Activated CD4-positive, alpha-beta memory T cell treated with anti-CD3 and anti-CD28 coated beads for 36 hours (primary cell): ENCODE measurements at regions of chr17 and their contacts with region 1.

Region 1: GRCh38 chr17:78250891-78251794 is 19.7 kb downstream of the TMEM235 start:
- DNase-seq: peak; percentile 92
- H3K4me3 Mint-ChIP-seq: peak overlapping the region; percentile 44
- H3K27ac Mint-ChIP-seq: peak overlapping the region; percentile 9
- H3K4me1 Mint-ChIP-seq: peaks cover 31% of the 10 kb centered on the region
- H3K27me3 Mint-ChIP-seq: no peaks in the 10 kb centered on the region

Region 2: DNA sequence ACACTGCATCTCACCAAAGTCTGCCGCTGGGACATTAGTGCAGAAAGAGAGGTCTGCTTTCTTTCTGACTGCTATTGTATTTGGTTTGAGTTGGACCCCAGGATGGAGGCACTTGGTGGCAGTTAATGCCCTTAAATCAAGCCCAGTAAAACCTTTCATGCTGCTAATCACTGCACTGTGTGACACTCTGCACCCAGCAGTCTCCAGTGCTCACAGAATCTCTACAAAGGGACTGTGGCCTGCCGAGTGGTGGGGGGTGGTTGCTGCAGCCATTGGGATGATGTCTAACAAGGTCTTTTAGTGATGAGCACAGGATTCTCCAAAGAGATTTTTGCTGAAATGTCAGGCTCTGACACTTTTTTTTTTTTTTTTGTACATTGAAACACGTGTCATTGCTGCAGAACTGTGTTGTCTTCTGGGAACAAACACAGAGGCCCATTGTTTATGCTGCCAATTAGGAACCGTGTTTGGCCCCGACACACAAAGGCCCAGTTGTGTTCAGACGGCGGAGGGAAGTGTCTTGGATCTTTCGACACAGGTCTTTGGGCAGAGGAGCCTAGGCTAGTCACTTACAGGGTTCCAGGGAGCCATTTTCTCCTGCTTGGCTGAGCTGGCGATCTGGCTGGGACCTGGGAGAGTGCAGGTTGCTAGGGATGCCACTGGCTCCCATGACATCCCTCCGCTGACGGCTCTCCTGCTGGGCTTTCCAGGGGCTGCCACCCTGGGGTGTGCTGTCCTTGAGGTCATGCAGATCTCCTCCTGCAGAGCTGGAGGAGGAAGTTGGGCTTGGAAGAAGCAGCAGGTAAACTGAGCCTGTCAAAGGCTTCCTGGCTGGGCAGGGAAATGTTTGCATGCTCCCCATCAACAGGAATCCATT is 308.8 kb before region 1 on chr17:
- CTCF ChIA-PET with region 1: no interaction called
- POLR2A ChIA-PET with region 1: no interaction called
- intact Hi-C with region 1: no loop called
- DNase-seq: no peak
- H3K4me3 Mint-ChIP-seq: no peak overlapping the region
- H3K27ac Mint-ChIP-seq: no peak overlapping the region
- H3K4me1 Mint-ChIP-seq: no peaks in the 10 kb centered on the region
- H3K27me3 Mint-ChIP-seq: peaks cover 3% of the 10 kb centered on the region

Region 3: GRCh38 chr17:78082988-78083387 is 168.2 kb before region 1 on chr17:
- CTCF ChIA-PET with region 1: interaction called, 27 read pairs
- POLR2A ChIA-PET with region 1: no interaction called
- intact Hi-C with region 1: loop called (anchors 1 kb)
- DNase-seq: no peak
- H3K4me3 Mint-ChIP-seq: no peak overlapping the region
- H3K27ac Mint-ChIP-seq: no peak overlapping the region
- H3K4me1 Mint-ChIP-seq: no peaks in the 10 kb centered on the region
- H3K27me3 Mint-ChIP-seq: no peaks in the 10 kb centered on the region

Region 4: GRCh38 chr17:78186692-78187595 is 64.2 kb before region 1 on chr17 and contains the starts of genes AFMID and TK1:
- CTCF ChIA-PET with region 1: interaction called, 13 read pairs
- POLR2A ChIA-PET with region 1: no interaction called
- intact Hi-C with region 1: no loop called
- DNase-seq: peak; percentile 98
- H3K4me3 Mint-ChIP-seq: peak within 1 kb of the TSS; percentile 90
- H3K27ac Mint-ChIP-seq: peak within 1 kb of the TSS; percentile 75
- H3K4me1 Mint-ChIP-seq: peaks cover 29% of the 10 kb centered on the region
- H3K27me3 Mint-ChIP-seq: no peaks in the 10 kb centered on the region
- total RNA-seq, gene AFMID: 16.8 to 19.0 TPM
- total RNA-seq, gene TK1: 188 to 193 TPM

Region 5: GRCh38 chr17:78272181-78272913 is 21.2 kb after region 1 on chr17:
- CTCF ChIA-PET with region 1: interaction called, 10 read pairs
- POLR2A ChIA-PET with region 1: no interaction called
- intact Hi-C with region 1: no loop called
- DNase-seq: peak; percentile 86
- H3K4me3 Mint-ChIP-seq: no peak overlapping the region
- H3K27ac Mint-ChIP-seq: no peak overlapping the region
- H3K4me1 Mint-ChIP-seq: peaks cover 35% of the 10 kb centered on the region
- H3K27me3 Mint-ChIP-seq: no peaks in the 10 kb centered on the region

Region 6: GRCh38 chr17:78341559-78342448 is 90.7 kb after region 1 on chr17:
- CTCF ChIA-PET with region 1: interaction called, 9 read pairs
- POLR2A ChIA-PET with region 1: interaction called, 3 read pairs
- intact Hi-C with region 1: loop called (anchors 5 kb)
- DNase-seq: no peak
- H3K4me3 Mint-ChIP-seq: no peak overlapping the region
- H3K27ac Mint-ChIP-seq: no peak overlapping the region
- H3K4me1 Mint-ChIP-seq: peaks cover 74% of the 10 kb centered on the region
- H3K27me3 Mint-ChIP-seq: peaks cover 1% of the 10 kb centered on the region

Region 7: DNA sequence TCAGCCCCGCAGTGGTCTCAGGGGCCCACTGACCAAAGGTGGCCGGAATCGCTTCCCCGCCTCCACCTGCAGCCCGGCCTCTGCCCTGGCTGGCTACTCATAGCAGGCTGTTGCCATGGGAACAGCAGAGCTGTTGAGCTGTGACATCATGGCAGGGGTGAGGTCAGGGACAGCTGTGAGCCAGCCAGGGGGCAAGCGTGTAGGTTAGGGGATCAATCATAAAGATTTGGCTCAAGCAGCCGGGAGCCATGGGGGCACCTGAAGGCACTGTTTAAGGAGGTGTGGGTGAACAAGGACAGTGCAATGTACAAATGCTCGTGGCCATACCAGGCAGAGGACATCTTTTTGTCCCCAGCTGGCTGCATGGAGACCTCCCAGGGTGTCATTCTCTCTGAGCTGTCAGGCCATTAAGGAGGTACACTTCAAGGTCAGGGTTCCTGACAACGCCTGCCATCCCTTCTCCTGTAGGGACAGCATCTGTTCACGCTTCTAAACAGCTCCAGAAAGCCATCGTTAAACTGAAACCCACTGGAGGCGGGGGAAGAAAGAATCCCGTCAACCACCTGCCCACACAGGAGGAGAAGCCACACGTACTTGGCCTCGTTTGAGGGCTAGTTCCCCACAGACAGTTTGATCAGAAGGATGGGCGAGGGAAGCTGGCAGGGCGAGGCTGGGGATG is 652.1 kb after region 1 on chr17 and contains the start of gene CEP295NL:
- CTCF ChIA-PET with region 1: no interaction called
- POLR2A ChIA-PET with region 1: no interaction called
- intact Hi-C with region 1: no loop called
- DNase-seq: peak; percentile 66
- H3K4me3 Mint-ChIP-seq: no peak within 1 kb of the TSS
- H3K27ac Mint-ChIP-seq: peak within 1 kb of the TSS; percentile 48
- H3K4me1 Mint-ChIP-seq: peaks cover 12% of the 10 kb centered on the region
- H3K27me3 Mint-ChIP-seq: no peaks in the 10 kb centered on the region
- total RNA-seq, gene CEP295NL: not detected